Calu3 (cell line): ENCODE measurements at regions of chr5 and their contacts with region 1.

Region 1: DNA sequence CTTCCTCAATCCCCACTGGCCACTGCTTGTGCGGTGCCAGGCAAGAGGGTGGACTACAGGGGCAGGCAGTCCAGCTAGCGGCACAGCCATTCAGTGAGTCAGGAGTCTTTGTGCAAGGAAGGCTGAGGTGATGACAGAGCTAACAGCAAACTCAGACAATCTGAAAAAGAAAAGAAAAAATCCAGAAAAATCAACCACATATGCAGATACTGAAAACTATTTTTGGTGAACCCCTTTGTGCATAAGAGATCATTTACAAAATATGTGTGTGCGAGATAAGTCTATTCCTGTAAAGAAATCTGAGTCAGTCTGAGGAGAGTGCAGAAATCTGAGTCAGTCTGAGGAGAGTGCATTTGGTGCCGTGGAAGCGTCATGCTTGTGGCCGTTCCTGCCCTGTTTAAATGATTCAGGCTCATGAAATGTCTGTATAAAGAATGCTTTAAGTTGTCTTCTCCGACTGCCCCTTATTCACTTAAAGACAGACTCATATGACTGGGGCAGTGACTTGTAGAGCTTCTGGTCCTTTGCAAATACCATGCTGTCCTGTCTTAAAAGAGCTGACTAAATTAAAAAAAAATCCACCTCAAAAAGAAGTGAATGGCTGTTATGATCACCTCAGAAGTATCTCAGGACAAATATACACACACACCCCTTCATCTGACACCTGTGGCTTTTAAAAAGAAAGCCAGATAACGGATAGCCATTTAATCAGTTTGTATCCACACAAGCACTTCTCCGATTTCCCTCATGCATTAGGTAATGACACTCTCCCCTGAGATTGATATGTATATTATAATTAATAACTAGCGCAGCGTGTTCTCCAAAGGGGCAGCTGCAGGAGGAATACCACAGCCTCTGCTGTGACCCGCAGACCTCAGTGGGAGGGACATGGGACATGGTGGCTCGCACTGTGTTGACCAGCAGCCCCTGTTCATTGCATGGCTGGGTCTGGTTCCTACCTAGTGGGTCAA is 47.3 kb downstream of the TRIO start:
- DNase-seq: peak; percentile 49
- H3K4me3 Mint-ChIP-seq: peak overlapping the region; percentile 62
- H3K27ac Mint-ChIP-seq: peak overlapping the region; percentile 82
- H3K4me1 Mint-ChIP-seq: peaks cover 74% of the 10 kb centered on the region
- H3K27me3 Mint-ChIP-seq: no peaks in the 10 kb centered on the region
- CTCF ChIP-seq: no peak

Region 2: DNA sequence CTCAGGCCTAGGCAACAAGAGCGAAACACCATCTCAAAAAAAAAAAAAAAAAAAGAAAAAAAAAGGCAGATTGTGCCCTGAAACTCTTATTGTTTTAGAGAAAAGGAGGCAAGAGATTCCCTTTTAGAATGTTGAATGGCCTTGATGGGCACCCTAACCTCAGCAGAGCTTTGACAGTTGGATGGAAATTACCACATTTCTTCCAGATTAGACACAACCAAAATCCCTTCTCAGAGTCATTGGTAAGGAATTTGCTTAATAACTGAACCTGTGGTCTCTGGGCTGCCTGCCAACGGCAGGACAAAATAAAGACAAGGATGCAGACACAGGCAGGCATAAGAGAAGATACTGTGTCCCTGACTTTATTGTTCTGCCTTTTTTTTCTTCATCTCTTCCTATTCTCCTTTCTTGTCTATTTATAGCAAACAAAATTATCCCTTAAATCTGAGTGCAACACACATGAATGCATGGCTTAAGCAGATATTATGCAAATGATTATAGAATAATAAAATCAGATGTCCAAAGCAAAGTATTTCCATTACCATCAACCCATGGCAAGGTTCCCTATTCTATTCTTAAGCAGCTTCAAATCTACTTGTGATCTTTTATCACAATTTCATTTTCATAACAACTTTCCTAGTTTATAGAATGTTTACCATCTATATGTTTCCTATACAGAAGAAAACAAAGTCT is 84.6 kb before region 1 on chr5:
- CTCF ChIA-PET with region 1: no interaction called
- intact Hi-C with region 1: no loop called
- DNase-seq: peak; percentile 70
- H3K4me3 Mint-ChIP-seq: no peak overlapping the region
- H3K27ac Mint-ChIP-seq: peak overlapping the region; percentile 27
- H3K4me1 Mint-ChIP-seq: peaks cover 37% of the 10 kb centered on the region
- H3K27me3 Mint-ChIP-seq: no peaks in the 10 kb centered on the region
- CTCF ChIP-seq: no peak

Region 3: GRCh38 chr5:14204785-14205321 is 14.4 kb after region 1 on chr5:
- CTCF ChIA-PET with region 1: no interaction called
- intact Hi-C with region 1: loop called (anchors 2 kb)
- DNase-seq: peak; percentile 64
- H3K4me3 Mint-ChIP-seq: peak overlapping the region; percentile 43
- H3K27ac Mint-ChIP-seq: peak overlapping the region; percentile 86
- H3K4me1 Mint-ChIP-seq: peaks cover 68% of the 10 kb centered on the region
- H3K27me3 Mint-ChIP-seq: no peaks in the 10 kb centered on the region
- CTCF ChIP-seq: no peak

Region 4: DNA sequence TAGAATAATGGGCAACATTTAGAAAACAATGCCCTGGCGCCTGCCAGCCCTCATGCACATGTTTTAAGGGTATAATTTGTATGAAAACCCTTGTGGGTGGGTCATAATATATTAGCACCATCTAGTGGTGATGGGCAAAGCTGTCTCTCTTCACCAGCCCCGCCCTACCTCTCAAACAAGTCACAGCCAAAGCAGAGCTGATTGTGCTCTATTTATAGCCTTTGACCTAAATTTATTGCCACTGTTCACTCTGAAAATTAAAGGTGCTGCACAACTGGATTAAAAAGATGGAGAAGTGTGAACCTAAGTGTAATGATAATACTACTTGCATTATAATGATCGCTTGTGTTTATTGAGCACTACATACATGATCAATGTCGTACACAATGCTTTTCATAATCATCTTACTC is 813.0 kb after region 1 on chr5:
- CTCF ChIA-PET with region 1: no interaction called
- intact Hi-C with region 1: no loop called
- DNase-seq: peak; percentile 53
- H3K4me3 Mint-ChIP-seq: no peak overlapping the region
- H3K27ac Mint-ChIP-seq: no peak overlapping the region
- H3K4me1 Mint-ChIP-seq: peaks cover 21% of the 10 kb centered on the region
- H3K27me3 Mint-ChIP-seq: peaks cover 4% of the 10 kb centered on the region
- CTCF ChIP-seq: peak; percentile 60